Common myeloid progenitor, CD34-positive (primary cell): ENCODE measurements at regions of chr11 and their contacts with region 1.

Region 1: DNA sequence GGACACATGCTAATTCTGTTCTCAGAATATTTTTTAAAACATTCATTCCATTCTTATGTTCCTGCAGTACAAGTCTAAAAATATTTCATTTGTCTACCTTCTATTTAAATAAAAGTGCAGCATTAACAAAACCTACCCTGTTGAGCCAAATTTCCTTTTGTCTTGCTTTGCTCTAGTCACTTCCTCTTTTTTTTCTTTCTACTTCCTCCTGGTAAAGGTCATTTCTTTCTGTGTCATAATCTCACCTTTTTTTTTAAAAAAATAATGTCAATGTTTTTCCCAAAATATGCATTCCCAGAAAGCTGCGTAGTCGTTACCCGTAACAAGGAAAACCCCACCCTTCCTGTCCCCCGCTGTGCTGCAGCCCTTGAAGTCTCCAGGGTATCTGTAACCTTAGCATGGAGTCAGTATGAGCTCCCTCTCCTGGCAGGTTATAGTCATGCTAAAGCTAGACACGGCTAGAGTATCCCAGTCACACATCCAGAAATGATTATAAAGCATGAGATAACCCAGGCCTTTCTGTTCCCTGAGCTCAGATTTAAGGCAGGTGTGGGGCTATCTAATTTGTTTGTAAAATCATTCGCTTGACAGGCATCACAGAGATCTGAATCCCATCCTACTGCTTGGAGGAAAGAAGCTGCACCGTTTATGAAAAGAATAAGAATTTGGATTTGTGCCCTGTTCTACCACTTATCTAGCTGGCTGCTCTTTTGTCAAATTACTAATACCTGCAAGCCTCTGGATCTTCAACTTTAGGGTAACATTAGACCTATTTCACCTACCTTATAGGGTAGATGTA is 51.1 kb upstream of the EED start:
- DNase-seq: peak; percentile 81 to 89 (median 89)
- H3K4me3 ChIP-seq: peak overlapping the region in 4 of 7 experiments; percentile 19 to 66 (median 48)
- H3K27ac ChIP-seq: peak overlapping the region in 1 of 2 experiments; percentile 74
- H3K4me1 ChIP-seq: peaks cover 12 to 39% (median 26%) of the 10 kb centered on the region in 4 experiments
- H3K27me3 ChIP-seq: no peaks in the 10 kb centered on the region

Region 2: DNA sequence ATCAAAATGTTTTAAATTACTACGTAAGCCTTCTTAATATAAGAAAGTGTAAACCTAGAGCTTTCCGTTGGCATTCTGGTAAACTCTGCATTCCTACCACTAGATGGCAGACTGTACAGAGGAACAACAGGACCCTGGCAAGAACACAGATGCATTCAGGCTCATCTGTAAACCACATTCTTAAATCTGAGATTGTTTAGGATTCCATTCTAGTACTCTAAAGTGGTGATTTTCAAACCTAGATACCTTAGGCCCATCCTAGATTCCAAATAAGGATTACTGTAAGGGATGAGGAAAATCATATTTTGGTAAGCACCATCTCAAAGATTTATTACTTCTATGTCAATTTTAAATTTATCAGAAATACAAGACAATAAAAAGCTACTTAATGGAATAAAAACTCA is 151.5 kb before region 1 on chr11:
- CTCF ChIA-PET with region 1: interaction called, 64 read pairs
- POLR2A ChIA-PET with region 1: interaction called, 3 read pairs
- DNase-seq: peak; percentile 86 to 93 (median 92)
- H3K4me3 ChIP-seq: peak overlapping the region in 1 of 7 experiments; percentile 37
- H3K27ac ChIP-seq: peak overlapping the region in 1 of 2 experiments; percentile 58
- H3K4me1 ChIP-seq: peaks cover 0 to 37% (median 21%) of the 10 kb centered on the region in 4 experiments
- H3K27me3 ChIP-seq: no peaks in the 10 kb centered on the region

Region 3: DNA sequence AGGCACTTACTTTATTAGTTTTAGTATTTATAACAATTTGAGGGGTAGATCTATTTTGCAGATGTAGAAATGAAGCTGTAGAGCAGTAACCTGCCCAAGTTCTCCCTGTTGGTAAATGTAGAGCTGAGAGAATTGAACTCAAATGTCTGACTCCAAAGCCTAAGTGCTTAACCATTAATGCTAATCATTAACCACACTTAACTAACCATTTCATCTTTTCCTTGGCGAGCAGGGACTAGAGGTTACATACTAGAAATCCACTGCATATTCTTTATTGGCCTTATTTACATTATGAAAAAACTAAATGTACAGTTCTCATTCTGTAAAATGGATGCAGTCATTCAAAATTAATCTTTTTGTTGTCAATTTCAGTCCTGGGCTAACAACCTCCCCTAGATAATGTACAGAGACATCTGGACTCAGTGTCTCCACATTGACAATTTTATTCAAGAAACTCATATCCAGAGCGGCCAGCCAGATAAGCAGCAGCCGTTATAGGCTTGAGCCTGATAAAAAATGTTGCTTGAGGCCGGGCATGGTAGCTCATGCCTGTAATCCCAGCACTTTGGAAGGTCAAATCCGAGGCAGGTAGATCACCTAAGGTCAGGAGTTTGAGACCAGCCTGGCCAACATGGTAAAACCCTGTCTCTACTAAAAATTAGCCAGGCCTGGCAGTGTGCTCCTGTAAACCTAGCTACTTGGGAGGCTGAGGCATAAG is 47.9 kb before region 1 on chr11:
- CTCF ChIA-PET with region 1: interaction called, 10 read pairs
- POLR2A ChIA-PET with region 1: no interaction called
- DNase-seq: peak in 1 of 3 donors; percentile 63
- H3K4me3 ChIP-seq: no peak overlapping the region
- H3K27ac ChIP-seq: peak overlapping the region in 1 of 2 experiments; percentile 16
- H3K4me1 ChIP-seq: peaks cover 24 to 61% (median 52%) of the 10 kb centered on the region in 4 experiments
- H3K27me3 ChIP-seq: no peaks in the 10 kb centered on the region

Region 4: DNA sequence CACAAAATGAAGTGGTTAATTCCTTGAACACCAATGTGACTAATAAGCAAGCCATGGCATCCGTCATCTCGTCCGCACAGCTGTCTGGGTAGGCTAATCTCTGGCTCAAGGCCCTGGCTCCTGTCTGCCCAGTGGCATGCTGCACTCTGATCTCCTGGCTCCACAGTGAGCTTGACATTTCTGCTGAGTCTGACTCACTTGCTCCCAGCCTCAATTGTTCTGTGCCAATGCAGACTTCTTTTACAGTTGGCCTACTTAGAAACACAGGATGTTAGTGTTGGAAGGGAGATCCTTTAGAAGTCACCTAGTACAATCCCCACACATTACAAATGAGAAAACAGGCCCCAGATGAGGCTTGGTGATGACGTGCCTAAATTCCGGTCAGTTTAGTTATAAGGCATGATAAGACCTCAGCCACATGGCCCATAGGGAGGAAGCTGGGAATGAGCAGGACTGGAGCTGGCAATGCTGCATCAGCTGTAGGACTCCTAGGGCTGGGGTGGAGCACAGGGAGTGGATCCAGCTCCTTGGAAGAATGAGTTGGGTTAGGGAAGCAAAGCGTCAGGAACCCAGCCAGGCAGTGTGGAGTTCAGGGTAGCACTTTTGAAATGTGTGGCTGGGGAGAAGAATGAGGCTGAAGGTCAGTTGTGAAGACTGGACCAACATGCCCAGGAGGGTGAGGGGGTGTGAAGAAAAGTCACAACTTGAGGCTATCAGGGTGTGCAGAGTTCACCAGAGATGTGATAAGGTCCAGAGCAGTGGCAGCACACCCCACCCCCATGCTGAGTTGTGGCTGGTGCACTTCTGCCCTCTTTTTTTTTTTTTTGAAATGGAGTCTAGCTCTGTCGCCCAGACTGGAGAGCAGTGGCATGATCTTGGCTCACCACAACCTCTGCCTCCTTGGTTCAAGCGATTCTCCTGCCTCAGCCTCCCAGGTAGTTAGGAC is 19.1 kb before region 1 on chr11:
- CTCF ChIA-PET with region 1: interaction called, 18 read pairs
- POLR2A ChIA-PET with region 1: no interaction called
- DNase-seq: peak in 2 of 3 donors; percentile 51 to 71
- H3K4me3 ChIP-seq: no peak overlapping the region
- H3K27ac ChIP-seq: peak overlapping the region in 1 of 2 experiments; percentile 53
- H3K4me1 ChIP-seq: peaks cover 6 to 58% (median 46%) of the 10 kb centered on the region in 4 experiments
- H3K27me3 ChIP-seq: no peaks in the 10 kb centered on the region

Region 5: DNA sequence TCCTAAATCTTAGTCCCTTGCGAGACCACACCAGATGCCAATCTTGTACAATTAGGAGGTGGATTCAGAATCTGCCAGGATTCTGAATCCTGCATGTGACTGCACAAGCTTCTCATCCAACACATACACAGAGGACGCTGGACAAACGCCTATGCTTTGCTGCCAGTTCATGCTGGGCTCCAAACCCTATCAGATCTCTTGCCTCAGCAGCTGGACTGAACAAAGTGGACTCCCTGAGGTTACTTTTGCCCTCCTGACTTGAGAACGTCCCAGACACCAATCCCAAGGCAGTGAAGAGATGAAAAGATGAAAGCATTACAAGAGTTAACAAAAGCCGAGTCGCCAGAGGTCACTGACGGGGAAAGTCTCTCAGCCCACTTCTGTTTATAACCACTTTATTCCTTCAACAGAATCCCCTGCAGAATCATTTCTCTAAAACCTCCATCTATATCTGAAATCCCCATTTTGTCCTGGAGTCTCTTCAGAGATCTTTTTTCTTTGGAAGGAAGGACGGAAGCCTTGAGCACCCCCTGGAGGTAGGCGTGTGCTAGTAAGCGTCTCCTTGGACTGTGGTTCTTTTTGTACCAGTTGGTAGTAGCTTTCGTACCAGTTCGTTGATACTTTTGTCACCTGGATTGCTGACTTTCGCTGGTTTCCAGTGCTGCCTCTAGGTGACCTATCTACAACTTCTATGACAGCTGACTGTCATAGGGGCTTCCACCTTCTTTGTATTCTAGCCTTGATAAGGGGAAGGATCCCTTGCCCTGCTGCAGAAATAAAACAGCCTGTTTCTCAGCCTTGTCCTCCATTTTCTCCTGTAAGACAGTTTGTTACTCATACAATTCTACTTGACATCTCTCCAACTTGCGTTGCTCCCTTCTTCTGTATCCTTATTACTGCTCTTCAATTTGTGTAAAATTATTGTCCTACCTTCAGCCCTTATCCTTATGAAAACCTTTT is 24.9 kb after region 1 on chr11:
- CTCF ChIA-PET with region 1: interaction called, 11 read pairs
- POLR2A ChIA-PET with region 1: no interaction called
- DNase-seq: peak; percentile 72 to 89 (median 81)
- H3K4me3 ChIP-seq: peak overlapping the region in 5 of 7 experiments; percentile 24 to 75 (median 32)
- H3K27ac ChIP-seq: no peak overlapping the region
- H3K4me1 ChIP-seq: peaks cover 0 to 7% (median 3%) of the 10 kb centered on the region in 4 experiments
- H3K27me3 ChIP-seq: no peaks in the 10 kb centered on the region

Region 6: GRCh38 chr11:86255896-86256295 is 62.4 kb after region 1 on chr11:
- CTCF ChIA-PET with region 1: no interaction called
- POLR2A ChIA-PET with region 1: no interaction called
- DNase-seq: no peak
- H3K4me3 ChIP-seq: no peak overlapping the region
- H3K27ac ChIP-seq: no peak overlapping the region
- H3K4me1 ChIP-seq: no peaks in the 10 kb centered on the region
- H3K27me3 ChIP-seq: no peaks in the 10 kb centered on the region